Dorsolateral prefrontal cortex (tissue), 120 donors: ENCODE measurements at regions of chr6 and their contacts with region 1.

Region 1: GRCh38 chr6:158220786-158221442 is 52.8 kb downstream of the GTF2H5 start:
- DNase-seq: peak; percentile 72 to 90 (median 79)
- H3K4me3 ChIP-seq: no peak overlapping the region
- H3K27ac ChIP-seq: no peak overlapping the region
- H3K27me3 ChIP-seq: no peaks in the 10 kb centered on the region
- CTCF ChIP-seq: peak; percentile 78 to 99 (median 96)

Region 2: GRCh38 chr6:157954150-157955117 is 266.5 kb before region 1 on chr6:
- intact Hi-C with region 1: no loop called
- DNase-seq: no peak
- H3K4me3 ChIP-seq: peak overlapping the region in 42 of 59 donors; percentile 1 to 55 (median 28)
- H3K27ac ChIP-seq: peak overlapping the region in 2 of 59 donors; percentile 2 to 3
- H3K27me3 ChIP-seq: no peaks in the 10 kb centered on the region
- CTCF ChIP-seq: no peak

Region 3: DNA sequence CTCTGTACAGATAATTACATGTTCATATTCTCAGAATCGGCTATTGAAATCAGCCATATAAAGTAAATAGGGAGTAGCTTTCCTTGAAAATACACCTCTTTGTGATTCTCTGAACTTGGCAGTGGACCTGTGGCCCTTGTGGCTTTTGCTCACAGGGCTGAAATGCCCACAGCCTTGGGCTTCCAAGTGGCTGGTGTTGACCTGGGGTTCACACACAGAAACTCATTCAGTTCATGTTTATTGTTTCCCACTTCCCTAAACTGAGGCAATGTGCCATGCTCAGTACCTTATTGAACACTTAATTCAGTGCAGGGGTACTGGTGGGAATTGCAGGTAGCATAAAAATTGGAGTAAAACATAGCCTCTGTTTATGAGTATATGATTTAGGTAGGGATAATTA is 72.2 kb after region 1 on chr6:
- intact Hi-C with region 1: no loop called
- DNase-seq: no peak
- H3K4me3 ChIP-seq: no peak overlapping the region
- H3K27ac ChIP-seq: peak overlapping the region in 18 of 59 donors; percentile 3 to 92 (median 22)
- H3K27me3 ChIP-seq: no peaks in the 10 kb centered on the region
- CTCF ChIP-seq: no peak

Region 4: GRCh38 chr6:158518191-158519127 is 297.5 kb after region 1 on chr6:
- intact Hi-C with region 1: loop called (anchors 5 kb)
- DNase-seq: peak in 9 of 10 donors; percentile 55 to 79 (median 68)
- H3K4me3 ChIP-seq: peak overlapping the region in 57 of 59 donors; percentile 1 to 65 (median 42)
- H3K27ac ChIP-seq: peak overlapping the region in 32 of 59 donors; percentile 1 to 69 (median 36)
- H3K27me3 ChIP-seq: peaks cover 0 to 8% (median 0%) of the 10 kb centered on the region in 45 donors
- CTCF ChIP-seq: peak; percentile 25 to 81 (median 64)

Region 5: DNA sequence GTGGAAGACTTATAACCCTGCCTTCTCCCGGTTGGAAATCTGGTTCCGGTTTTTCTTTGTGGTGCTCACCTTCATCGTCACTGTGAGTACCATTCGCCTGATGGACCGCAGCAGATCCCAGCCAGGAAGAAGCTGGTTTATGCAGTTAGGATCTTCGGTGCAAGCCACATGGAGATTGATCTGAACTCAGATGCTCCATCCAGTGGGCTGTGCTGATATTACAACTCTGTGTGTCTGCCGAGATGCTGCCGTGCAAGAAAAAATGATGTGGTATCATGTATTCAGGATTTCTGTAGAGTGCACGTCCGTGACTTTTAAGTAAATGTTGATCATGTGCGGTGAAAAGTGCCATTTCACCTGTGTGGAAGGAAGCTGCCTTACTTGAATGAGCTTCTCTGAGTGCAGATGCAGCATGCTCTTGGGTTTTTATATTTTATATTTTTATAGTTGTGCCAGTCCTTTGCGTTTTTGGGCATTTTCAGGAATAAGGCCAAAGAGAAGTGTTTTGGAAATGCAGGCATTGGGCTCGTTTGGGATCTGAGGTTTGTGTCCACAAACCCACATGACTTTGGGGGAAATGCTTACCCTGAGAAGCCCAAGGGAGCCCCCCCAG is 384.5 kb after region 1 on chr6:
- intact Hi-C with region 1: loop called in 1 of 2 experiments (anchors 2 kb)
- DNase-seq: peak in 7 of 10 donors; percentile 59 to 83 (median 68)
- H3K4me3 ChIP-seq: no peak overlapping the region
- H3K27ac ChIP-seq: peak overlapping the region in 28 of 59 donors; percentile 1 to 69 (median 34)
- H3K27me3 ChIP-seq: no peaks in the 10 kb centered on the region
- CTCF ChIP-seq: peak; percentile 47 to 90 (median 84)

Region 6: DNA sequence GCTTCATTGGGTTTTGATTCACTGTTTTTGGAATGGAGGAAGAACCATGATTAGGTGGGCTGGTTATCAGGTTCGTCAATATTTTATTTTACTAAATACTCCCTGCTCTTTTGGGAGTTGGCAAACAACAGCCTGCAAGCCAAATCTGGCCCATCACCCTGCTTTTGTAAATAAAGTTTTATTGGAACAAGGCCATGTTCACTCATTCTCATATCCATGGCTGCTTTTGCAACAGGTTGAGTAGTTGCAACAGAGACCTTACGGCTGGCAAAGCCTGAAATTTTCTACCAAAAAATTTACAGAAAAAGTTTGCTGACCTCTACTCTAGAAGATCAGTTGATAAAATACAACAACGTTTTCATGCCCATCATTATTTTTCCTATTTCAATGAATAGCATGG is 474.0 kb after region 1 on chr6:
- intact Hi-C with region 1: loop called (anchors 5 kb)
- DNase-seq: no peak
- H3K4me3 ChIP-seq: no peak overlapping the region
- H3K27ac ChIP-seq: no peak overlapping the region
- H3K27me3 ChIP-seq: no peaks in the 10 kb centered on the region
- CTCF ChIP-seq: no peak